ENCODE measurements at regions of chr1 and their contacts with region 1.

Region 1: DNA sequence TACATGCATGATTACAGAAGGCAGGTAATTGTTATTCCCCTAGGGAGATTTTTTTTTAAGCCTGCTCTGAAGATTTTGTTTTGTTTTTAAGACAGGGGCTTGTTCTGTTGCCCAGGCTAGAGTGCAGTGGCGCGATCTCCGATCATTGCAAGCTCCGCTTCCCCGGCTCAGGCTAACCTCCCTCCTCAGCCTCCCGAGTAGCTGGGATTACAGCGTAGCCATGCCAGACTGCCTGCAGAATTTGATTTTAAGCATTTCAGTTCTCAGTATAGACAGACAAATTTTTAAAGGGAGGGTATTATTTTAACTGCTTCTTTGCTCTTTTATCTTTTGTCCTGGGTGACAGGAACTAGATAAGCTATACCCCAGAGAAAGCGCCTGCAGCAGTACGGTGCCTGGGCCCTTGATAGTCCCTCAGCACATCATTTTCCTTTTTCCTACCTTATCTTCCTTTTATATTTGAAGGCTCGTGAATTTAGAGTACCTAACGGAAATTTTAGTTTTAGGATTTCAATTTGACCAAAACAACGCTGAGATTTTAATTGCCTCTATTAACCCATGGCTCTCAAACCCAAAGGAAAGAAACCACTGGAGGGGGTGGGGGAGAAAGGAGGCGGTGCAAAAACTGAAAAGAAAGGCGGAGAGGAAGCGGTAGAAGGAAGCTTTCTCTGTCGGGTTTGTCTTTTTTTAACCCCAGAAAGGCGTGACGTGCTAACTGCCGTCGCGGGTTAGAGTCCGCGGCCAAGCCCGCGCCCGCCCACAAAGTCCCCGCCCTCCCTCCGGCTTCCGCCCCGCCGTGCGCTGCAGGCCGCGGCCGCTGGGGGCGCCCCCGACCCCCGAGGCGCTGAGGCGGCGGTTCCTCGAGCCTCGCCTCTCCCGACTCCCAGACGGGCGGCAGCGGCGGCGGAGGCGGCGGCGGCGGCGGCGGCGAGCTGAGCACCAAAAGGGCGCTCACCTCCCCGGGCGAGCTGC is at the start of gene EEIG2:
- DNase-seq: peak; percentile 90
- ATAC-seq: peak; percentile 88
- H3K4me3 Mint-ChIP-seq: peak within 1 kb of the TSS; percentile 93
- H3K27ac Mint-ChIP-seq: peak within 1 kb of the TSS; percentile 90
- H3K4me1 Mint-ChIP-seq: peaks cover 24% of the 10 kb centered on the region
- H3K27me3 Mint-ChIP-seq: no peaks in the 10 kb centered on the region
- CTCF ChIP-seq: no peak
- total RNA-seq, gene EEIG2: 7.0 and 7.1 TPM in 2 replicates

Region 2: DNA sequence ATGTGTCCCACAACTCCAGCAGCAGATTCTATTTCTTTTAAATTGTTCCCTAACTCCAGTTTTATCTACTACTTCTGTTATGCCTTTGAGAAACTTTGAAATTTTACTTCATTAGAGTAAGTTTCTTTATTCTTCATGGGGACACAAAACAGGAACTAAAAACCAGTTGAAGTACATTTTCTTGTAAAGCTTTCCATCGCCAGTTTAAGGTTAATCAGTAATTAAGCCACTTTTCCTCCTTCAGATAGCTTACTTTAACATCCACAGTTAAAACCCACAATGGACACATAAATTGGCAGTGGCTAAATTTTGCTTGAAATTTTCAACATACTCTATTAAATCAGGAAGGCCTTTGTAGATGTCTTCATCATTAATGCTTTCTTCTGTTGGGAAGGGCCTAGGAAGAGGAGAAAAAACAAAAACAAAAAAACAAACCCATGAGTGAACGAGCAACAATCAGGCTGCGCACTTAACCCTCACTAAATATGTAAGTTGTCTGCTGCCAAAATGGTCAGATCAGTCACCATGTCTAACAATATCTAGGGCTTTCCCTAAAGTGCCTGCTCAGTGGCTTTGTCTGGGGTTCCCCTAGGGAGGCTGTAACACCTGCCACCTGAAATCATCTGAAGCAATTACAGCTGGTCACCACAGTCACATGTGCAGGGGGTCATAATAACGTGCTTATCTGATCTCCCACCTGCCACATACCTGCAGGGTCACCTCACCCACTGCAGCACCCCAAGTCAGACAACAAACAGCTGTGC is 782.4 kb before region 1 on chr1:
- CTCF ChIA-PET with region 1: interaction called, 12 read pairs
- POLR2A ChIA-PET with region 1: interaction called, 4 read pairs
- intact Hi-C with region 1: loop called (anchors 5 kb)
- DNase-seq: peak; percentile 29
- ATAC-seq: peak; percentile 92
- H3K4me3 Mint-ChIP-seq: peak overlapping the region; percentile 73
- H3K27ac Mint-ChIP-seq: peak overlapping the region; percentile 91
- H3K4me1 Mint-ChIP-seq: peaks cover 22% of the 10 kb centered on the region
- H3K27me3 Mint-ChIP-seq: no peaks in the 10 kb centered on the region
- CTCF ChIP-seq: no peak

Region 3: DNA sequence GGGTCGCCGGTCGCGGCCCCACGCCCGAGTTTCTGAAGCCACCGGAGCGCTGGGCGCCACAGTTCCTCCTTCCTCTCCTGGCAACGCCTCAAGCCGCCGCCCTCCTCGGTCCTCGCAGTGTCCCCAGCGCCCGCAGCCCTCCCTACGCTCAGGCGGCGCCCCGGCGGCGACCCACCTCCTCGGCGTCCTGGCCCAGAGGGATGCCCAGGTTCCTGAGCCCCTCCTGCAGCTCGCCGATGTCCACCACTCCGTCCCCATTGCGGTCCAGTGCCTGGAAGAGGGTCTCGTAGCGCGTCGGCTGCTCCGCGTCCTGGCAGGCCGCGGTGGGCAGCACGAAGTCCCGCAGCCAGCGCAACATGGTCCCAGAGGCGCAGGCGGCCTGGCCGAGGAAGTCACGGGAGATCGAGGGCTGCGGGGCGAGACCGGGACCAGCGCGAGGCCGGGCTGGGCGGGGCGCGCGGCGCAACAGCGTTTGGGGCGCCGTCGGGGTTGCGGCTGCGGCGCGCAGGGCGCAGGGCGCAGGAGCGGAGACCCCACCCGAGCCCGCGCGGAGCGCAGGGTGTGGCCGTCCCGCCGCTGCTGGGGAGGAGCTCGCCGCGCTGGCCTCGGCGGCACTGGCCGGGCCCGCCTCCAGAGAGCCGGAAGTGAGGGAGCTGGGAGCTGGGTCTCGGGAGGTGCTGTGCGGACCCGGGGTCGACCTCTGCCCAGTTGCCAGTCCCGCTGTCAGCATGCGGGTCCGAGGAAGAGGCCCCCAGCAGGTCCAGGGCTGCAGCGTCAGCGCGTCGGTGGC is 359.5 kb before region 1 on chr1 and contains the start of gene SLC25A24:
- CTCF ChIA-PET with region 1: interaction called, 3 read pairs
- POLR2A ChIA-PET with region 1: interaction called, 6 read pairs
- intact Hi-C with region 1: loop called (anchors 5 kb)
- DNase-seq: peak; percentile 85
- ATAC-seq: peak; percentile 94
- H3K4me3 Mint-ChIP-seq: peak within 1 kb of the TSS; percentile 93
- H3K27ac Mint-ChIP-seq: peak within 1 kb of the TSS; percentile 86
- H3K4me1 Mint-ChIP-seq: peaks cover 29% of the 10 kb centered on the region
- H3K27me3 Mint-ChIP-seq: no peaks in the 10 kb centered on the region
- CTCF ChIP-seq: no peak
- total RNA-seq, gene SLC25A24: 20.2 and 22.1 TPM in 2 replicates

Region 4: GRCh38 chr1:108570128-108570527 is 10.6 kb after region 1 on chr1:
- CTCF ChIA-PET with region 1: interaction called, 20 read pairs
- POLR2A ChIA-PET with region 1: no interaction called
- intact Hi-C with region 1: no loop called
- DNase-seq: no peak
- ATAC-seq: peak; percentile 97
- H3K4me3 Mint-ChIP-seq: no peak overlapping the region
- H3K27ac Mint-ChIP-seq: no peak overlapping the region
- H3K4me1 Mint-ChIP-seq: no peaks in the 10 kb centered on the region
- H3K27me3 Mint-ChIP-seq: no peaks in the 10 kb centered on the region
- CTCF ChIP-seq: no peak

Region 5: DNA sequence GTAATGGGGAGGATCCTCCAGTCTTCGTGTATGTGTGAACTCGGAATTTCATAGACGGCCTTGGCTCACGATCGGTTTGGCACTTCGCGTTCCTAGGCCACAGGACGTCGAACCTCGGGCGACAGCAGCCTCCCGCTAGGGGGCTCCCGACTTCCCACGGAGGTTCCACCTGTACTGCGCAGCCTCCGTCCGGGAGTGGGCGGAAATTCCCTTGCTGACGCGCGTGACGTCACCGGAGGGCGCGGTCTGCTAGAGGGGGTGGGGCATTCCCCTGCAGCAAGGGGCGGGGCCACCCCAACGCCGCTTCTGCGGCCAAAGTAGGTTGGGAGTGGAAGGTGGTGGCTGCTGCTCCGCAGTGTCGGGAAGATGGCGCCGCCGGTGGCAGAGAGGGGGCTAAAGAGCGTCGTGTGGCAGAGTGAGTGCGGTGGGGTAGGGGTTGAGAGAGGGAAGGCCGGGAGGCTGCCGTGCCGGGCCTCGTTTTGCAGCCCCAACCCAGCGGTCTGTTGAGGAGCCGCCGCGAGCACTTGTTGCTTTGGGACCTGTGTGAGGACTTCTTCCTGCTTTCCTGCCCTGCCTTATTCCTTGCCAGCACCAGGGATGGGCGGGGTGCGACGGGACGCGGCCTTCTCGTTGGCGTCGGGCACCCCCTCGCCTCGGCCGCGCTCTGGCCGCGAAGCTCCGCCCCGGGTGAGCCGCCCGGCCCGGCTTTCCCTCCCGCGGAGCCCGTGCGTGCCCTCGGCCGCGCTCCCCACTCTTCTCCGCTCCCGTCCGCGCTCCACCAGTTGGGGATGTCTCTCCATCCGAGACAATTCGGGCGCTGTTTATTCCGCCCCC is 187.1 kb after region 1 on chr1 and contains the start of gene STXBP3:
- CTCF ChIA-PET with region 1: no interaction called
- POLR2A ChIA-PET with region 1: no interaction called
- intact Hi-C with region 1: loop called (anchors 1 kb)
- DNase-seq: peak; percentile 99
- ATAC-seq: peak; percentile 92
- H3K4me3 Mint-ChIP-seq: peak within 1 kb of the TSS; percentile 99
- H3K27ac Mint-ChIP-seq: peak within 1 kb of the TSS; percentile 99
- H3K4me1 Mint-ChIP-seq: peaks cover 28% of the 10 kb centered on the region
- H3K27me3 Mint-ChIP-seq: no peaks in the 10 kb centered on the region
- CTCF ChIP-seq: peak; percentile 93
- total RNA-seq, gene STXBP3: 46.4 and 50.2 TPM in 2 replicates

Region 6: DNA sequence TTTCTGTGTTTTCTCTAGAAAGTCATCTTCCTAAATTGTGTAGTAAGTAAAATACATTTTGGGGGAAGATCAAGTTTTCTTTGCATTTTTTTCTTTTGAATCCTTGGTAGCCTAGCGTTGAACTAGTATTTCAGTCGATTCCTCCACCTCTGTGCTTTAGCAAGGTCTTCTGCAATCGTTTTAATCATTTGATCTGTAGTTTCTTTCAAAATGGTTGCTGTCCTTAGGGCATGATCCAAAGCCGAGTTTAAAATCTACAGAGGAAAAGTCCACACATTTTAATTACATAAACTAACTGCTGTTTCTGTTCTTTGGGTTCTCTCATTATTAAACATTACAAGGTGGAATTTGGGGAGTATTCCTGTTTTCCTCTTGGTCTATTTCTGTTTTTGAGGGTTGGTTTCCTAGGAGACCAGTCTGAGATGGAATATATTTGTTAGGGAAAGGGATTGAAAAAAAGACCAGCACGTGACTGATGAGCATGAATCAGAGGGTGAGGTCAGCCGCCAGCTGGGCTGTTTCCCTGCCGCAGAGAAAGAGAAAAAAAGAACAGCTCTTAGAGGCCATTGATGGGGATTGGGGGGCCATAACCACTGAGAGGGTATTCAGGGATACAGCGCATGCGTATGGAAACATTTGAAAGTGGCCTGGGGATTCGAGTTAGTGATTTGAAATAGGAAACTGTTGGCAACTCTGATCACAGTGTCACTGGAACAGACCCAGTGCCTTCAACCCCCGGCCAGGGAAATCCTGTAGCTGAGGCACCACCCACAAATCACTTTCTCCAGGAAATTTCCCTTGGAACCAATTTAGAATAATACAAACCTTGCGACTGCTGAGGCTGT is 256.8 kb after region 1 on chr1:
- CTCF ChIA-PET with region 1: no interaction called
- POLR2A ChIA-PET with region 1: no interaction called
- intact Hi-C with region 1: no loop called
- DNase-seq: no peak
- ATAC-seq: no peak
- H3K4me3 Mint-ChIP-seq: no peak overlapping the region
- H3K27ac Mint-ChIP-seq: no peak overlapping the region
- H3K4me1 Mint-ChIP-seq: no peaks in the 10 kb centered on the region
- H3K27me3 Mint-ChIP-seq: peaks cover 3% of the 10 kb centered on the region
- CTCF ChIP-seq: no peak

Region 7: GRCh38 chr1:108963052-108963686 is 403.7 kb after region 1 on chr1 and contains the start of gene CLCC1:
- CTCF ChIA-PET with region 1: no interaction called
- POLR2A ChIA-PET with region 1: no interaction called
- intact Hi-C with region 1: loop called (anchors 2 kb)
- DNase-seq: peak; percentile 84
- ATAC-seq: peak; percentile 94
- H3K4me3 Mint-ChIP-seq: peak within 1 kb of the TSS; percentile 88
- H3K27ac Mint-ChIP-seq: peak within 1 kb of the TSS; percentile 91
- H3K4me1 Mint-ChIP-seq: peaks cover 35% of the 10 kb centered on the region
- H3K27me3 Mint-ChIP-seq: no peaks in the 10 kb centered on the region
- CTCF ChIP-seq: no peak
- total RNA-seq, gene CLCC1: 19.5 and 28.3 TPM in 2 replicates